ENCODE measurements at regions of chr2 and their contacts with region 1.

Region 1: GRCh38 chr2:218631837-218632236 is 24.1 kb downstream of the PLCD4 start:
- DNase-seq: no peak
- H3K4me3 ChIP-seq: no peak overlapping the region
- H3K27ac ChIP-seq: no peak overlapping the region
- H3K4me1 ChIP-seq: no peaks in the 10 kb centered on the region
- H3K27me3 ChIP-seq: no peaks in the 10 kb centered on the region; a peak in 1 of 7 replicates
- CTCF ChIP-seq: no peak
- EP300 ChIP-seq: no peak
- POLR2A ChIP-seq: no peak
- RAD21 ChIP-seq: no peak

Region 2: GRCh38 chr2:218648088-218648786 is 16.4 kb after region 1 on chr2:
- CTCF ChIA-PET with region 1: interaction called, 10 read pairs
- POLR2A ChIA-PET with region 1: interaction called, 13 read pairs
- DNase-seq: peak in 1 of 2 experiments; percentile 71
- H3K4me3 ChIP-seq: no peak overlapping the region
- H3K27ac ChIP-seq: no peak overlapping the region
- H3K4me1 ChIP-seq: no peaks in the 10 kb centered on the region
- H3K27me3 ChIP-seq: no peaks in the 10 kb centered on the region
- CTCF ChIP-seq: peak; percentile 73 to 97 (median 92)
- EP300 ChIP-seq: no peak
- POLR2A ChIP-seq: no peak
- RAD21 ChIP-seq: peak; percentile 82 to 83

Region 3: DNA sequence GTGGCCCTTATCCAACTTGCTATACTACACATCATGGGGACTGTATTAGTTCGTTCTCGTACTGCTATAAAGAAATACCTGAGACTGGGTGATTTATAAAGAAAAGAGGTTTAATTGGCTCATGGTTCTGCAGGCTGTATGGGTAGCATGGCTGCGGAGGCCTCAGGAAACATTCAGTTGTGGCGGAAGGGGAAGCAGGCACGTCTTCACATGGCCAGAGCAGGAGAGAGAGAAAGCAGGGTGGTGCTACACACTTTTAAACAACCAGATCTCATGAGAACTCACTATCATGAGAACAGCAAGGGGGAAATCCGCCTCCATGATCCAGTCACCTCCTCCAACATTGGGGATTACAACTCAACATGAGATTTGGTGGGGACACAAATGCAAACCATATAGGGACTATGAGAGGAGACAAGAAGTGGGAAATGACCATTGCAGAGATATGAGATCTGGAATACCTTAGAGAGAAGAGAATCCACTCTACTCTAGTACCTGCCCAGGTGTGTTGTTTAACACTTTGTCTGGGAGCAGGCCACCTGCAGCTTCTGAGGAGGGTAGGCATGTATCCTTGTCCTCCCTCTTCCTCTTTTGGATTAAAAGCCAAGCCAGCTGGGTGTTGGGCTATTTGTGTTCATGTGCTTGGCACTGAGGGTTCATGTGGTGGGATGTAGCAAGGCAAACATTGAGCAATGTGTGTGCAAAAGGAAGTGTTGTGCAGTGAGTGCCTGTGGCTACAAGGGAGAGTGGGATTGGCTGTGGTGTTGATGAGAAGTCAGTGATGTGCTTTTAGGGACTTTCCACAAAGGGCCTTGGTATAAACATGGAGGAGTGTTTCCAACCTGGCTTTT is 101.6 kb after region 1 on chr2:
- CTCF ChIA-PET with region 1: no interaction called
- POLR2A ChIA-PET with region 1: no interaction called
- DNase-seq: no peak
- H3K4me3 ChIP-seq: no peak overlapping the region
- H3K27ac ChIP-seq: no peak overlapping the region
- H3K4me1 ChIP-seq: peaks cover 0 to 17% (median 6%) of the 10 kb centered on the region in 4 experiments; a peak in 5 of 7 replicates
- H3K27me3 ChIP-seq: no peaks in the 10 kb centered on the region
- CTCF ChIP-seq: no peak
- EP300 ChIP-seq: no peak
- POLR2A ChIP-seq: no peak
- RAD21 ChIP-seq: no peak

Measured in H1 (cell line).